ENCODE measurements at regions of chr2 and their contacts with region 1.

Region 1: DNA sequence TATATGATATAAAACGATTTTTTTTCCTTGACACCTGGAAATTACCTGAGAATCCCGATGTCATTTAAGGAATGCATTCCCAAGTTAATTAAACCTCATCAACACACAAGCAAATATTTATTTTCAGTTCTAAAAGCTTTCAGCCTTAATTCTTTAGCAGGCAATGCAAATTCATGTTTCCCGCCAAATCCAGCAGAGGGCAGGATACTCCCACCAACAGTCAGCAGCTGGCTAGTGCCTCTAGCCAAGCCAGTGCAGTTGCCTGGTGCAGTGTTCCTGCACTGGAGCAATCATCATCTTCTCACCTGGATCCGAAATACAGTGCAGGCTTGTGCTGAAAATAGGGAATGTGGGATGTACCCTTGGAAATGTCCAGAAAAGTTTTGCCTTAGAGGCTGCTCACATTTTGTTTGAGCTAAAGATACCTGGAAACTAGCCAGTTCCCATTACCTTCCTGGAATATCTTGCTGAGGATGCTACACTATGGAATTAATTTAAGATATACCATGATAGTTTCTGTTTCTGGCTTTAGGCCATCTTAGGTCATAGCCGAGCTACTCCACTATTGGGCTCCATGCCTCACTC is 48.4 kb upstream of the CYTIP start:
- DNase-seq: peak; percentile 65 to 70 (median 69)
- H3K4me3 ChIP-seq: no peak overlapping the region
- H3K4me3 Mint-ChIP-seq: no peak overlapping the region
- H3K27ac ChIP-seq: no peak overlapping the region
- H3K27ac Mint-ChIP-seq: peak overlapping the region in 1 of 7 donors; percentile 65
- H3K4me1 ChIP-seq: peaks cover 8% of the 10 kb centered on the region
- H3K4me1 Mint-ChIP-seq: peaks cover 17 to 19% (median 18%) of the 10 kb centered on the region in 4 donors
- H3K27me3 ChIP-seq: no peaks in the 10 kb centered on the region
- H3K27me3 Mint-ChIP-seq: no peaks in the 10 kb centered on the region

Region 2: DNA sequence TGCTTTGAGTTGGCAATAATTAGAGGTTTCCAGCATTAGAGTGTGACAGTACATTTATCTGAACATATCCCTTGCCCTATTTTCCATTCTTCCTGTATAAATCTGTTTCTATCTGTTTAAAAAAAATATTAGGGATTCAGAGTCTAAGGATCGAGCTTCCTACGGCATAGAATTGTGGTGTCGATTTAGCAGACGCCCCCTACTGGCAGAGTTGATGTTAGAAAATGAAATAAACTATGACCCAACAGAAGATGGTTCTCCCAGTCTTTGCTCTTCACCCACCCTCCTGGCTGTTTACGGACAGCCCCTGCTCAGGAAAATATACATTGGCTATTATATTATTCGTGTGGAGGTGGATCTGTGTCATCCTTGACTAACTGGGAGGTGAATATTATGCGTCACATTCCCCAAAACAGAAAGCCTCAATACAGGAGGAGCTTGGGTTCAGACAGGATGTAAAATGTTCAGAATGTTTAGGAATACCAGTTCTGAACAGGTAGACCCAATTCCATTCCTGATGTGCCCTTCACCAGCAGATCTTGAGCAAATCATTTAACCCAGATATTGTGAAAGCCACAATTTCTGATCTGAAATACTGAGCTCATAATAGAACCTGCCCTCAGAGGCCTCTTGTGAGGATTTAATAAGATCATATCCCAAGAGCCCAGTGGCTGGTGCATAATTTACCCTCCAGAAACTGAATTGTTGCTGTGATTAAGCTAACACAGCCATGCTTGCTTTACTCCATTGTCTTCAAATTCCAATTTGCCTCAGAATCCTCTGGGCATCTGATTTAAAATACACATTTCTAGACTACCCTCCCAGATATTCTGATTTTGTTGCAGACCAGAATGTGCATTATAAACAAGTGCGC is 155.9 kb before region 1 on chr2:
- CTCF ChIA-PET with region 1: interaction called, 135 read pairs
- POLR2A ChIA-PET with region 1: interaction called, 3 read pairs
- intact Hi-C with region 1: no loop called
- DNase-seq: peak in 4 of 5 donors; percentile 40 to 53 (median 48)
- H3K4me3 ChIP-seq: no peak overlapping the region
- H3K4me3 Mint-ChIP-seq: peak overlapping the region; percentile 61 to 83 (median 75)
- H3K27ac ChIP-seq: no peak overlapping the region
- H3K27ac Mint-ChIP-seq: peak overlapping the region; percentile 19 to 87 (median 45)
- H3K4me1 ChIP-seq: peaks cover 43% of the 10 kb centered on the region
- H3K4me1 Mint-ChIP-seq: peaks cover 45 to 60% (median 51%) of the 10 kb centered on the region in 4 donors
- H3K27me3 ChIP-seq: no peaks in the 10 kb centered on the region
- H3K27me3 Mint-ChIP-seq: no peaks in the 10 kb centered on the region

Region 3: GRCh38 chr2:157480182-157480961 is 11.9 kb before region 1 on chr2:
- CTCF ChIA-PET with region 1: interaction called, 13 read pairs
- POLR2A ChIA-PET with region 1: no interaction called
- intact Hi-C with region 1: no loop called
- DNase-seq: no peak
- H3K4me3 ChIP-seq: no peak overlapping the region
- H3K4me3 Mint-ChIP-seq: no peak overlapping the region
- H3K27ac ChIP-seq: no peak overlapping the region
- H3K27ac Mint-ChIP-seq: peak overlapping the region in 2 of 7 donors; percentile 27 to 47
- H3K4me1 ChIP-seq: peaks cover 8% of the 10 kb centered on the region
- H3K4me1 Mint-ChIP-seq: peaks cover 9 to 26% (median 16%) of the 10 kb centered on the region in 4 donors
- H3K27me3 ChIP-seq: no peaks in the 10 kb centered on the region
- H3K27me3 Mint-ChIP-seq: no peaks in the 10 kb centered on the region

Region 4: DNA sequence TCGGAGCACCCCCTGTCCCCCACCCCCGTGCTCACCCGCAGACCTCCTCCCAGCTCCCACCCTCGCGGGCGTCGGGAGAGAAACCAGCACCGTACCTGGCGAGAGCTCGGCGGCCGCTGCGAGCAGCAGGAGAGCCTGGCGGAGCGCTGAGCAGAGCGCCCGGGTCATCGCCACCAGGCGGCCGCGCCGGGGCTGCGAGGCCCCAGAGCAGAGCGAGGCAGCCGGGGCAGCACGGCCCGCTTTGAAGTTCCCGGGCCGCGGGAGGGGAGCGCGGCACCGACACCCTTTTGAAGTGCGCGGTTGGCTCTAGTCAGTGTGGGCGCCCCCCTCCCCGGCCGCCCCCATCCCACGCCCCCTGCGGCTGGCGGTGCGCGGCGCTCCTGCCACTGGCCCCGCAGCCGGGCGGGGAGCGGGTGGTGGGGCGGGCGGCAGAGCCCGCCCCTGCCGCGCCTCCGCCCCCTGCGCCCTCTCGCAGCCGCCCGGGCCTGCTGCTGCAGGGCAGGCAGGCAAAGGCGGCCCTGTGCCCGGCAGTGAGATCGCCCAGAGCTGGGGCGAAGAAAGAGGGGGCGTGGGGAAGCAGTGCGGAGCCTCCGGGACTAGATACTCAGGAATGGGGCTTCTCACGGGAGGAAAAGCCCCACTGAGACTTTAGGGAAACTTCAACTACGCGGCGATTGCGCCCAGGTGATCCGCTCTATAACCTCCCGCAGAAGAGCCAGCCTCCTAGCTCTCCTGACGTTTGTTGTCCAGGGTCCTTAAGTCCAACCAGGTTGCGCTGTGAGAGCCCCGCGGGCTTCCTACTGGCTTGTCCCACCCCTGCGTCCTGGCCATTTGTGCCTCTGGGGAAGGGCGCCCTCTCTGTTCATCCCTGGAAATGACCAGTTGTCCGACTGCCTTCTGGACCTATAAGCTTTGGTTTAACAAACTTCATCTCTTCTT is 136.5 kb after region 1 on chr2 and contains the start of gene ACVR1C:
- CTCF ChIA-PET with region 1: interaction called, 6 read pairs
- POLR2A ChIA-PET with region 1: no interaction called
- intact Hi-C with region 1: loop called (anchors 5 kb)
- DNase-seq: peak; percentile 70 to 81 (median 75)
- H3K4me3 ChIP-seq: peak within 1 kb of the TSS; percentile 45 to 68
- H3K4me3 Mint-ChIP-seq: peak within 1 kb of the TSS; percentile 92 to 98 (median 95)
- H3K27ac ChIP-seq: peak within 1 kb of the TSS; percentile 58
- H3K27ac Mint-ChIP-seq: peak within 1 kb of the TSS; percentile 85 to 94 (median 89)
- H3K4me1 ChIP-seq: peaks cover 39% of the 10 kb centered on the region
- H3K4me1 Mint-ChIP-seq: peaks cover 22 to 48% (median 33%) of the 10 kb centered on the region in 4 donors
- H3K27me3 ChIP-seq: no peaks in the 10 kb centered on the region
- H3K27me3 Mint-ChIP-seq: peaks cover 0 to 2% of the 10 kb centered on the region in 2 donors
- total RNA-seq, gene ACVR1C: 6.3 to 6.9 TPM

Region 5: DNA sequence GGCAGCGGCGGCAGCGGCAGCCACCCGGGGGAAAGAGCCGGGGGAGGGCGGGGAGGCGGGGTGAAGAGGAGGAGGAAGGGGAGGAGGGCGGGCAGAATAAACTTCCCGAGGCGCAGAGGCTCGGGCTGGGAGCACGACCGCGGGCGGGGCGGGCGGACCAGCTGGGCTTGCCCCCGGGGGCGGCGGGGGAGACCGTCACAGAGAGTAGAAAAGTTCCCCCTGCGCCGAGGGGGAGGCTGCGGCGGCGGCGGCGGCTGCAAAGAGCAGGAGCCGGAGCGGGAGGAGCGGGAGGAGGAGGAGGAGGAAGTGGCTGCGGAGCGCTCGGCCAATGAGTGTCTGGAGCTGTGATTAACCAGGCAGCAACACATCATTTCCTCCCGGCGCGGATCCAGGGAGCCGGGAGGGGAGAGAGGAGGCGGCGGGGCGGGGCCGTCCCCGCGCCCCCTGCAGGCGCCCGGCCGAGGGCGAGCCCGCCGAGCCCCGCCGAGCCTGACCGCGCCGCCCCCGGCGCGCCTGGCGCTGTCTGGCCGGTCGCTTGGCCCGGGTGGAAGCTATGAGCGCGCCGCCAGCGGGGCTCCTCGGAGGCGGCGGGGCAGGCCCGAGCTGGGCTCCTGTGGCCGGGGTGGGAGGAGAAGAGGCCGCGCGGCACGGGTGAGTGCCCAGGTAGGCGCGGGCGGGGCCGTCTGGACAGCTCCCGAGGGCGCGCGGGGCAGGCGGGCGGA is 383.9 kb after region 1 on chr2 and contains the start of gene ACVR1:
- CTCF ChIA-PET with region 1: no interaction called
- POLR2A ChIA-PET with region 1: no interaction called
- intact Hi-C with region 1: loop called (anchors 10 kb)
- DNase-seq: peak; percentile 78 to 90 (median 80)
- H3K4me3 ChIP-seq: peak within 1 kb of the TSS; percentile 74 to 76
- H3K4me3 Mint-ChIP-seq: peak within 1 kb of the TSS; percentile 94 to 100 (median 96)
- H3K27ac ChIP-seq: peak within 1 kb of the TSS; percentile 66
- H3K27ac Mint-ChIP-seq: peak within 1 kb of the TSS; percentile 88 to 96 (median 93)
- H3K4me1 ChIP-seq: peaks cover 71% of the 10 kb centered on the region
- H3K4me1 Mint-ChIP-seq: peaks cover 46 to 69% (median 60%) of the 10 kb centered on the region in 4 donors
- H3K27me3 ChIP-seq: no peaks in the 10 kb centered on the region
- H3K27me3 Mint-ChIP-seq: no peaks in the 10 kb centered on the region
- total RNA-seq, gene ACVR1: 26.9 to 31.9 TPM

Region 6: DNA sequence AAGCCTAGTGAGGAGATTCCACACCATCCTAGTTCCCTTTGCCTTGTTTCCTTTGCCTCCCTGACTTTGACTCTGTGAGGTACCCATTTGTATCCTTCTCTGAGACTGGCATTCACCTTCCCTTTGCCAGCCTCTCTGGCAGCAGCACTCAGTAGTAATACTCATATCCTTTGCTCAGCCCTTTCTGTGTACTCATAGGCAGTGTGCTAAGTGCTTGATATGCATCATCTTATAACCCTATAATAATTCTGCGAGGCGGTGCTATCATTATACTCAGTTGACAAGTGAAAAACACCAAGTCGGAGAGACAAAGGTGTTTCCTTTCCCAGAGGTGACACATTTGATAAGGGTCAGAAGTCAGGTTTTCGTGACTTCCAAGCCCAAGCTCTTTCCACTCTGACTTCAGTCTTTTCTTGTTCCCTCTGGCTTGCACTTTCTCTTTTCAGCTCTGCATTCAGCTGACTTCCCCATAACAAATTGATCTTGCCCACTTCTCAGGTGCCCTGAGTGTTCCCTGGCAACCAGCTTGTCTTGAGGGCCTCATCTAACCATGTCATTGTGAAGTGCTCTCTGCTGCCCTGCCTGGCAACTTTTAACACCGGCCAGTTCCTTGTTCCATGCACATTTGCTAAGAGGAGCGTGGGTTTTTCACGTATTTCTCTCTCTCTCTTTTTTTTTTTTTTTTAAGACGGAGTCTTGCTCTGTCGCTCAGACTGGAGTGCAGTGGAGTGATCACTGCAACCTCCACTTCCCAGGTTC is 514.9 kb after region 1 on chr2:
- CTCF ChIA-PET with region 1: interaction called, 19 read pairs
- POLR2A ChIA-PET with region 1: no interaction called
- intact Hi-C with region 1: loop called (anchors 1 kb)
- DNase-seq: no peak
- H3K4me3 ChIP-seq: no peak overlapping the region
- H3K4me3 Mint-ChIP-seq: no peak overlapping the region
- H3K27ac ChIP-seq: no peak overlapping the region
- H3K27ac Mint-ChIP-seq: peak overlapping the region in 1 of 7 donors; percentile 15
- H3K4me1 ChIP-seq: no peaks in the 10 kb centered on the region
- H3K4me1 Mint-ChIP-seq: peaks cover 3 to 6% (median 5%) of the 10 kb centered on the region in 4 donors
- H3K27me3 ChIP-seq: no peaks in the 10 kb centered on the region
- H3K27me3 Mint-ChIP-seq: peaks cover 1 to 6% of the 10 kb centered on the region in 2 donors

Region 7: DNA sequence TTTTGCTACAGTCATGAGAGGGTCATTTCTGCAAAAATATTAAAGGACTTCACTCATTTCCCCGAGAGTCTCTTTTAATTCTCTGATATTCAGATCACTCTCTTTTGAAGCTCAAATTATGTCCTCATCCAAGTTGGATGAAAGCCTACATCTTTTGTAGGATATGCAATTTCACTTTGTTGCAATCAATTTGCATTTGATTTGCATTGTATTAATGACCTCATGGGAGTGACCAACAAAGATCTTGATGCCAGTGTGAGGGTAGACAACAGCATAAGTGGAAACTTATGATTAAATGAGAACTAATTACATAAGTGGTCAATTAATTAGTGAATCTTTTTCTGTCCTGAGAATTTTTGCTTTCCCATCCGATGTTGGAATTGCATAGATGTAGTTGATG is 549.1 kb after region 1 on chr2:
- CTCF ChIA-PET with region 1: no interaction called
- POLR2A ChIA-PET with region 1: no interaction called
- intact Hi-C with region 1: no loop called
- DNase-seq: no peak
- H3K4me3 ChIP-seq: no peak overlapping the region
- H3K4me3 Mint-ChIP-seq: no peak overlapping the region
- H3K27ac ChIP-seq: no peak overlapping the region
- H3K27ac Mint-ChIP-seq: no peak overlapping the region
- H3K4me1 ChIP-seq: no peaks in the 10 kb centered on the region
- H3K4me1 Mint-ChIP-seq: no peaks in the 10 kb centered on the region
- H3K27me3 ChIP-seq: no peaks in the 10 kb centered on the region
- H3K27me3 Mint-ChIP-seq: peaks cover 12 to 13% of the 10 kb centered on the region in 2 donors

Region 8: GRCh38 chr2:158753641-158754611 is 1261.6 kb after region 1 on chr2:
- CTCF ChIA-PET with region 1: interaction called, 3 read pairs
- POLR2A ChIA-PET with region 1: no interaction called
- intact Hi-C with region 1: loop called (anchors 2 kb)
- DNase-seq: peak in 4 of 5 donors; percentile 31 to 43 (median 36)
- H3K4me3 ChIP-seq: no peak overlapping the region
- H3K4me3 Mint-ChIP-seq: no peak overlapping the region
- H3K27ac ChIP-seq: no peak overlapping the region
- H3K27ac Mint-ChIP-seq: no peak overlapping the region
- H3K4me1 ChIP-seq: no peaks in the 10 kb centered on the region
- H3K4me1 Mint-ChIP-seq: no peaks in the 10 kb centered on the region
- H3K27me3 ChIP-seq: no peaks in the 10 kb centered on the region
- H3K27me3 Mint-ChIP-seq: peaks cover 16 to 24% of the 10 kb centered on the region in 2 donors